ENCODE measurements at regions of chr6 and their contacts with region 1.

Region 1: GRCh38 chr6:165925474-165926156 is 242.0 kb downstream of the TBXT start:
- DNase-seq: no peak
- H3K4me3 Mint-ChIP-seq: no peak overlapping the region
- H3K27ac Mint-ChIP-seq: no peak overlapping the region
- H3K4me1 Mint-ChIP-seq: no peaks in the 10 kb centered on the region
- H3K27me3 Mint-ChIP-seq: no peaks in the 10 kb centered on the region

Region 2: GRCh38 chr6:165962361-165962760 is 36.7 kb after region 1 on chr6:
- intact Hi-C with region 1: loop called (anchors 1 kb)
- DNase-seq: no peak
- H3K4me3 Mint-ChIP-seq: no peak overlapping the region
- H3K27ac Mint-ChIP-seq: no peak overlapping the region
- H3K4me1 Mint-ChIP-seq: no peaks in the 10 kb centered on the region
- H3K27me3 Mint-ChIP-seq: no peaks in the 10 kb centered on the region

Measured in activated T-helper 1 cell treated with anti-CD3 and anti-CD28 coated beads, Interleukin-12 subunit alpha, Interleukin-12 subunit beta, Interleukin-2, Interleukin-4 antibody, amounts not matched to agents 30 ng/mL and 10 ng/mL and 1 ng/mL, durations not matched to agents 14 hours and 24 hours and 36 hours (primary cell).